Natural killer cell (primary cell): ENCODE measurements at regions of chr12 and their contacts with region 1.

Region 1: GRCh38 chr12:27014085-27014858 is at the start of gene TM7SF3:
- DNase-seq: peak; percentile 95 to 98
- ATAC-seq: peak; percentile 90 to 98 (median 91)
- H3K4me3 ChIP-seq: peak within 1 kb of the TSS; percentile 93
- H3K4me3 Mint-ChIP-seq: peak within 1 kb of the TSS; percentile 89
- H3K27ac ChIP-seq: peak within 1 kb of the TSS; percentile 94
- H3K27ac Mint-ChIP-seq: peak within 1 kb of the TSS; percentile 95 to 100
- H3K4me1 ChIP-seq: peaks cover 20% of the 10 kb centered on the region
- H3K4me1 Mint-ChIP-seq: peaks cover 39 to 45% of the 10 kb centered on the region in 2 donors
- H3K27me3 ChIP-seq: no peaks in the 10 kb centered on the region
- H3K27me3 Mint-ChIP-seq: no peaks in the 10 kb centered on the region
- CTCF ChIP-seq: peak; percentile 96
- total RNA-seq, gene TM7SF3: 32.1 to 48.4 (median 42.6) TPM

Region 2: DNA sequence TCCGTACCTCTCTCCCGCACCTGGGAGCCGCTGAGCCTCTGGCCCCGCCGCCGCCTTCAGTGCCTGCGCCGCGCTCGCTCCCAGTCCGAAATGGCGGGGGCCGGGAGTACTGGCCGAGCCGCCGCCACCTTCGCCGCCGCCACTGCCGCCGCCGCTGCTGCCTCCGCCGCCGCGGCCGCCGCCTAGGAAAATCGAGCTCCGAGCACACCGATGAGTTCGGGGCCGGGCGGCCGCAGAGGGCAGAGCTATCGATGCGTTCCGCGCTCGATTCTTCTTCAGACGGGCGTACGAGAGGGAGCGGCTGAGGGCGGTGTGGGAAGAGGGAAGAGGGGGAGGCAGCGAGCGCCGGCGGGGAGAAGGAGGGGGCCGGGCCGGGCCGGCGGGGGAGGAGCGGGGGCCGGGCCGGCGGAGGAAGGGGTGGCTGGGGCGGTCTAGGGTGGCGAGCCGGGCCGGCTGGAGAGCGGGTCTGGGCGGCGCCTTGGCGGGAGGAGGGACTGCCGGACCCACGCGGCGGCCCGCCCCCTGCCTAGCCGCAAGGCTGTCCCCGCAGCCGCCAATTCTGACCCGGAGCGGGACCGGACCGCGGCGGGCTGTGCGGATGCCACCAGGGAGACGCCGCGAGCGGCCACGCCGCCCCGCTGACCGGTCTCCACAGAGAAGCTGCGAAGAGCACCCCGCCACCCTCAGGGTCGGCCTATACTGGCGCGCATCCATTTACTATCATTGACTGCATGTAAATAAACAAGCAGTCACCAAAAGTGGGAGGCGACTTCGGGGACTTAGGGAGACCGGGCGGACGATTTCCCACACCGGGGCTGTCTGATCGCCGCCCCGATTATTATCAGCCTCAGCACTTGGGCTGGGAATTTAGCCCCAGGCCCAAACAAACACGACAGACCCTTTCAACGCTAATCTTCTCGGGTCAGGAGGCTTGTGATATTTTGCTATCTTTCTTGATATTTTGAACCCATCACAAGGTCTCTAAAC is 1763.2 kb before region 1 on chr12 and contains the start of gene KRAS:
- intact Hi-C with region 1: loop called (anchors 10 kb)
- DNase-seq: peak; percentile 87 to 97
- ATAC-seq: peak; percentile 86 to 96 (median 87)
- H3K4me3 ChIP-seq: peak within 1 kb of the TSS; percentile 93
- H3K4me3 Mint-ChIP-seq: peak within 1 kb of the TSS; percentile 93
- H3K27ac ChIP-seq: peak within 1 kb of the TSS; percentile 80
- H3K27ac Mint-ChIP-seq: peak within 1 kb of the TSS; percentile 85 to 93
- H3K4me1 ChIP-seq: peaks cover 17% of the 10 kb centered on the region
- H3K4me1 Mint-ChIP-seq: peaks cover 21 to 38% of the 10 kb centered on the region in 2 donors
- H3K27me3 ChIP-seq: no peaks in the 10 kb centered on the region
- H3K27me3 Mint-ChIP-seq: no peaks in the 10 kb centered on the region
- CTCF ChIP-seq: no peak
- total RNA-seq, gene KRAS: 33.3 to 39.6 (median 35.7) TPM

Region 3: DNA sequence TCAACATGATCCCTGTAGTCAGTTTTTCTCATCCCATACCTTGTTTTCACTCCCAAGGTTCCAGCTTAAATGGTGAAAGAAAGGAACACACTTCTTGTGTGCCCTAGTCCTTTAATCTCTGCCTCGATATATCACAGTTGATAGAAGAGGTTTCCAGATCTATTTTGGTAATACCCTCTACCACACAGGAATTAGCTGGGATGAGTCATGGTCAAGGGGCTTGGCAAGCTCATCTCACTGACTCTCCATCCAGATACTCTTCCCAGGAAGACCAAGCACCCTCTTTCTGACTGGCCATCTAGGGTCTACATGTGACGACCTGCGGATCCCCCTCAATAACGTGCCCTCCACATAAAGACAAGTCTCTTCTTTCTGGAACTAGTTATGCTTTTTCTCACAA is 459.1 kb before region 1 on chr12:
- intact Hi-C with region 1: no loop called
- DNase-seq: no peak
- ATAC-seq: no peak
- H3K4me3 ChIP-seq: no peak overlapping the region
- H3K4me3 Mint-ChIP-seq: no peak overlapping the region
- H3K27ac ChIP-seq: no peak overlapping the region
- H3K27ac Mint-ChIP-seq: no peak overlapping the region
- H3K4me1 ChIP-seq: no peaks in the 10 kb centered on the region
- H3K4me1 Mint-ChIP-seq: peaks cover 0 to 5% of the 10 kb centered on the region in 2 donors
- H3K27me3 ChIP-seq: no peaks in the 10 kb centered on the region
- H3K27me3 Mint-ChIP-seq: no peaks in the 10 kb centered on the region
- CTCF ChIP-seq: no peak

Region 4: DNA sequence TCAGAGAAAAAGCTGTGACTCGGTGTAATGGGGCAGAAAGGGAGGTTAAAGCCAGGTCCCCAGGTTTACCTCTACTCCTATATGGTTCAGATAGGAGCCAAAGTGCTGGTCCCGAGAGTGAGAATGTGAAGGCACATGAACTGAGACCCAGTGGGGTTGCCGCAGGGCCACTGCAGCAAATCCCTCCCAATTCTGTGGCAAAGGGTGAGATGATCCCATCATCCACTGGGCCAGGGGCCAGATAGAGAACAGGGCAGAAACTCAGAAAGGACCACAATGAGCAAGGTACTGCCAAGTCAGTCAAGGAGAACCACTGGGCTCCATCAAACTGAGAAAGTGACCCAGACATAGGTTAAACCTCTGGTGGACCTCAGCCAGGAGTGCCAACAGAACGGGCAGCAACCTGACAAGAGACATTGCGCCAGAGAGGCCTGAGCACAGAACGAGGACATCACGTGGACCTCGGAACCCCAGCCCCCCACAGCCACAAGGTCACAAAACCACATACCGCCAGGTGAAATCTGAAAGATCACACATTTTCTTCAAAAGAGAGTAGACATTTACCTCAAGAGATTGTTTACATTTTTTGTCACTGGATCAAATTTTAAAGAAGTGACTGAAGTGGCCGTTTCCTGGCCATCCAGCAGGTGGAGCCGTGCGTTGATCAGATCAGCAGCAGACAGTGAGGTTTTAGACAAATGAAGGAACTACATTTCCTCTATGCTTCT is 160.8 kb before region 1 on chr12:
- intact Hi-C with region 1: loop called (anchors 2 kb)
- DNase-seq: peak; percentile 59 to 86
- ATAC-seq: peak; percentile 91 to 97 (median 94)
- H3K4me3 ChIP-seq: no peak overlapping the region
- H3K4me3 Mint-ChIP-seq: no peak overlapping the region
- H3K27ac ChIP-seq: no peak overlapping the region
- H3K27ac Mint-ChIP-seq: no peak overlapping the region
- H3K4me1 ChIP-seq: peaks cover 4% of the 10 kb centered on the region
- H3K4me1 Mint-ChIP-seq: no peaks in the 10 kb centered on the region
- H3K27me3 ChIP-seq: no peaks in the 10 kb centered on the region
- H3K27me3 Mint-ChIP-seq: no peaks in the 10 kb centered on the region
- CTCF ChIP-seq: peak; percentile 82

Region 5: DNA sequence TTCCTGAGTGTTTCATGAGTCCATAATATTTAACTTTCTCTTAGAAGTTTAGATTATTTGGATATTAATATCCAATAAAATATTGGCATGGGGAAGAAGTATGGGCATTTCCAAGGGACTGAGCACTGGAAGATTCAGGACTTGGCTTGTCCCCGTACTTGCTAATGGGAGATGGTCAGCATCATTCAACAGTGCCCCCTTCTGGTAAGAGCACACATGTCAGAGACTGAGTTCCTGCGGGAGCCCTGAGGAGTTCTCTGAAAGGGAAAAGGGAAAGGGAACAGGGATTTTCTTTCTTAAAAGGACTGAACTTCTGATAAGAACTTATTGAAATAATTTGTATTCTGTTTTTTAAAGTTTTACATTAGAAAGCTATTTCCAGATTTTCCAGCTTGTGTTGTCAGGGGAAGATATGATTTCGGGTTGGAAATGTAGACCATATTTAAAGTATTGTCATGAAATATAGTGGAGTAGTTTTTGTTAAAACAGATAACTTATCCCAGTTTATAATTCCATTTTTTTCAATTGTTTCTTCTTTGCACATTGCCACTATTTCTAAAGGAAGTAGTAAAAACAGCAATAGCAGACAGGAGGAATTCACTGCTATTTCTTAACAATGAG is 127.9 kb after region 1 on chr12:
- intact Hi-C with region 1: loop called (anchors 1 kb)
- DNase-seq: peak in 1 of 2 donors; percentile 78
- ATAC-seq: peak; percentile 59 to 82 (median 73)
- H3K4me3 ChIP-seq: no peak overlapping the region
- H3K4me3 Mint-ChIP-seq: peak overlapping the region; percentile 69
- H3K27ac ChIP-seq: no peak overlapping the region
- H3K27ac Mint-ChIP-seq: peak overlapping the region in 1 of 2 donors; percentile 26
- H3K4me1 ChIP-seq: peaks cover 4% of the 10 kb centered on the region
- H3K4me1 Mint-ChIP-seq: peaks cover 8 to 13% of the 10 kb centered on the region in 2 donors
- H3K27me3 ChIP-seq: no peaks in the 10 kb centered on the region
- H3K27me3 Mint-ChIP-seq: no peaks in the 10 kb centered on the region
- CTCF ChIP-seq: peak; percentile 72

Region 6: GRCh38 chr12:27305673-27306456 is 291.6 kb after region 1 on chr12:
- intact Hi-C with region 1: loop called (anchors 10 kb)
- DNase-seq: peak in 1 of 2 donors; percentile 64
- ATAC-seq: no peak
- H3K4me3 ChIP-seq: no peak overlapping the region
- H3K4me3 Mint-ChIP-seq: no peak overlapping the region
- H3K27ac ChIP-seq: no peak overlapping the region
- H3K27ac Mint-ChIP-seq: no peak overlapping the region
- H3K4me1 ChIP-seq: no peaks in the 10 kb centered on the region
- H3K4me1 Mint-ChIP-seq: no peaks in the 10 kb centered on the region
- H3K27me3 ChIP-seq: no peaks in the 10 kb centered on the region
- H3K27me3 Mint-ChIP-seq: no peaks in the 10 kb centered on the region
- CTCF ChIP-seq: peak; percentile 70